Prostate gland (tissue), 2 donors: ENCODE measurements at regions of chr4 and their contacts with region 1.

Region 1: DNA sequence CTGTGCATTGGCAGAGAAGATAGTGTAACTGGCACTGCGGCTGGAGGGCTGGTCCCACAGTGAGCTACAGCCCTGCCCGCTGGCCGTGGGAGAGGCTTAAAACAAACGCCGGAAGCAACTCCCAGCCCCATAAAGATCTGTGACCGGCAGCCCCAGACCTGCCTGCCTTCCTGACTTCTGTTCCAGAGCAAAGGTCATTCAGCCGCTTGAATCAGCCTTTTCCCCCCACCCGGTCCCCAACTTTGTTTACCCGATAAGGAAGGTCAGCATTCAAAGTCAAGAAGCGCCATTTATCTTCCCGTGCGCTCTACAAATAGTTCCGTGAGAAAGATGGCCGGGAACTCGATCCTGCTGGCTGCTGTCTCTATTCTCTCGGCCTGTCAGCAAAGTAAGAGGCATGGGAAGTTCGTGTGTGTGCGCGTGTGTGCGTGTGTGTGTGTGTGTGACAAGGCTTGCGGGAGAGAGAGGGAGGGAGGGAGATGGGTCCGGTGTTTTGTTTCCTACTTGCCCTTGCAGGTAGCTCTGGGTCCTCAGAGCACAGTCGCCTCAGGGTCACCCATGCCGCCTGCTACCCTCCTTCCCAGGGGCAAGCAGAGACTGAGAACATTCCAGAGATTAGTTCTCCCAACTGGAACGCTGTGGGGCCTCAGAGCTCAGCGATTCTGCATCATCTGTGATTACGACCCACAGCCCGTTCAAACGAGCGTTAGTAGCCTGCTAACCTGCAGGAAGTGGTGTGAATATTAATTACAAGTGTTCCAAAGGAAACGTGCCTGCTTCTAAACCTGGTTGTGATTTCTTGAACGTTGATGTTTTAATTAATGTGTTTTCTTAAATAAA is at the start of gene MGST2:
- DNase-seq: peak; percentile 83
- H3K4me3 ChIP-seq: peak within 1 kb of the TSS; percentile 47 to 53
- H3K27ac ChIP-seq: peak within 1 kb of the TSS; percentile 87 to 91
- H3K4me1 ChIP-seq: peaks cover 7% of the 10 kb centered on the region
- H3K27me3 ChIP-seq: no peaks in the 10 kb centered on the region
- CTCF ChIP-seq: no peak
- POLR2A ChIP-seq: peak; percentile 24
- total RNA-seq, gene MGST2: 101 to 135 TPM

Region 2: GRCh38 chr4:139794158-139794954 is 128.4 kb after region 1 on chr4:
- intact Hi-C with region 1: loop called (anchors 10 kb)
- DNase-seq: no peak
- H3K4me3 ChIP-seq: no peak overlapping the region
- H3K27ac ChIP-seq: no peak overlapping the region
- H3K4me1 ChIP-seq: no peaks in the 10 kb centered on the region
- H3K27me3 ChIP-seq: no peaks in the 10 kb centered on the region
- CTCF ChIP-seq: no peak
- POLR2A ChIP-seq: no peak